ENCODE measurements at regions of chr17 and their contacts with region 1.

Region 1: DNA sequence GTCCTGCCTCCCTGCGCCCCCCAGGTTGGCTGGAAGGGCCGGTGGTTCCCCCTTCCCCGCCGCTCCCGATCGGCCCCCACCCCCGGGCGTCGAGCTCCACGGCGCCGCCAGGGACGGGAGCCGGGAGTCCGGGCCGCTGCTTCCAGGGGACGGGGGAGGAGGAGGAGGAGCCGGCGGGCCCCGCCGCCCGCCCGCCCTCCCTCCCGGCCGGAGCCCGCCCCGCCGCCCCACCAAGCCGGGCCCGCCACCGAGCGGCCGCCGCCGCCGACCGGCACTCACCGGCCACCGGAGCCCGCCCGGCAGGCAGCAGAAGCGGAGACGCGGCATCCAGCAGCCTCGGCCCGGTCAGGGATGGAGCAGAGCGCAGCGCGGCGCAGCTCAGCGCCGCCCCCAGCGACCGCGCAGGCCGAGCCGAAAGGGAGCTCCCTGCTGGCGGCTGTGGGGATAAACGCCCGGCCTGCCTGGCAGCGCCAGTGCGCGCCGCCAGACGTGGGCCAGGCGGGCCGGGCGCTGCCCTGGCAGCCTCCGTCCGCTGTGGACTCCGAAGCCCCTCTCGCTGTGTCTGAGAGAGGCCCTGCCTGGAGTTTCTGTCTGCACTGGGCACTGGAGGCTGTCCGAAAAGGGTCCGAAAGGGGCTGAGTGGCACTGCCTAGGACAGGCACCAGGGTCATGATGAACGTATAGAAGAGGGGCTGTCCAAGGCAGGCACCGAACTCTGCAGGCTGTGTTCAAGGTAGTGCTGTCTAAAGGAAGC is at the start of gene MYO18A:
- DNase-seq: peak; percentile 87
- ATAC-seq: peak; percentile 97
- H3K4me3 ChIP-seq: peak within 1 kb of the TSS in 3 of 5 experiments; percentile 33 to 46 (median 44)
- H3K4me3 Mint-ChIP-seq: peak within 1 kb of the TSS; percentile 69
- H3K27ac ChIP-seq: no peak within 1 kb of the TSS
- H3K27ac Mint-ChIP-seq: no peak within 1 kb of the TSS
- H3K4me1 ChIP-seq: peaks cover 9 to 28% of the 10 kb centered on the region in 2 donors
- H3K4me1 Mint-ChIP-seq: peaks cover 16% of the 10 kb centered on the region
- H3K27me3 ChIP-seq: peaks cover 0 to 2% (median 0%) of the 10 kb centered on the region in 4 experiments
- H3K27me3 Mint-ChIP-seq: peaks cover 7% of the 10 kb centered on the region
- CTCF ChIP-seq: peak; percentile 81
- total RNA-seq, gene MYO18A: 155 and 169 TPM in 2 replicates

Region 2: GRCh38 chr17:29195465-29196081 is 15.4 kb after region 1 on chr17:
- CTCF ChIA-PET with region 1: interaction called, 32 read pairs
- POLR2A ChIA-PET with region 1: no interaction called
- intact Hi-C with region 1: no loop called
- DNase-seq: peak; percentile 64
- ATAC-seq: peak; percentile 87
- H3K4me3 ChIP-seq: peak overlapping the region in 3 of 5 experiments; percentile 17 to 34 (median 25)
- H3K4me3 Mint-ChIP-seq: peak overlapping the region; percentile 64
- H3K27ac ChIP-seq: no peak overlapping the region
- H3K27ac Mint-ChIP-seq: peak overlapping the region; percentile 34
- H3K4me1 ChIP-seq: peaks cover 19 to 22% of the 10 kb centered on the region in 2 donors
- H3K4me1 Mint-ChIP-seq: peaks cover 23% of the 10 kb centered on the region
- H3K27me3 ChIP-seq: no peaks in the 10 kb centered on the region
- H3K27me3 Mint-ChIP-seq: no peaks in the 10 kb centered on the region
- CTCF ChIP-seq: no peak

Region 3: GRCh38 chr17:29322363-29322762 is 142.2 kb after region 1 on chr17:
- CTCF ChIA-PET with region 1: no interaction called
- POLR2A ChIA-PET with region 1: no interaction called
- intact Hi-C with region 1: no loop called
- DNase-seq: no peak
- ATAC-seq: no peak
- H3K4me3 ChIP-seq: no peak overlapping the region
- H3K4me3 Mint-ChIP-seq: no peak overlapping the region
- H3K27ac ChIP-seq: no peak overlapping the region
- H3K27ac Mint-ChIP-seq: no peak overlapping the region
- H3K4me1 ChIP-seq: no peaks in the 10 kb centered on the region
- H3K4me1 Mint-ChIP-seq: no peaks in the 10 kb centered on the region
- H3K27me3 ChIP-seq: no peaks in the 10 kb centered on the region
- H3K27me3 Mint-ChIP-seq: no peaks in the 10 kb centered on the region
- CTCF ChIP-seq: no peak

Region 4: DNA sequence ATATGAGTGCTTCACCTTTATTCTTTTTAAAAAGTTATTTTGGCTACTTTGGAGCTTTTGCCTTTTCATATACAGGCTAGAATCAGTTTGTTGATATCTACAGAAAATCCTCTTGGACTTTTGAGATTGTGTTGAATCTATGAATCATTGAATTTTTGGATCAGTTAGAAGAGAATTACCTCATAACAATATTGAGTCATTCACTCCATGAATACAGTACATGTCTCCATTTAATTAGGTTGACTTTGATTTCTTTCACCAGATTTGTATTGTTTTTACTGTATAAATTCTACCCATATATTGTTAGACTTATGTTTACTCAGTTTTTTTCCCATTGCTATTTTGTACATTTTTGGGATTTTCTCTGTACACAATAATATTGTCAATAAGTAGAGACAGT is 264.4 kb after region 1 on chr17:
- CTCF ChIA-PET with region 1: no interaction called
- POLR2A ChIA-PET with region 1: no interaction called
- intact Hi-C with region 1: no loop called
- DNase-seq: no peak
- ATAC-seq: no peak
- H3K4me3 ChIP-seq: no peak overlapping the region
- H3K4me3 Mint-ChIP-seq: no peak overlapping the region
- H3K27ac ChIP-seq: no peak overlapping the region
- H3K27ac Mint-ChIP-seq: no peak overlapping the region
- H3K4me1 ChIP-seq: peaks cover 5 to 6% of the 10 kb centered on the region in 2 donors
- H3K4me1 Mint-ChIP-seq: peaks cover 37% of the 10 kb centered on the region
- H3K27me3 ChIP-seq: no peaks in the 10 kb centered on the region
- H3K27me3 Mint-ChIP-seq: no peaks in the 10 kb centered on the region
- CTCF ChIP-seq: no peak